ENCODE measurements at regions of chr16 and their contacts with region 1.

Region 1: GRCh38 chr16:66872559-66872942 is 7.8 kb upstream of the PDP2 start:
- DNase-seq: no peak

Region 2: DNA sequence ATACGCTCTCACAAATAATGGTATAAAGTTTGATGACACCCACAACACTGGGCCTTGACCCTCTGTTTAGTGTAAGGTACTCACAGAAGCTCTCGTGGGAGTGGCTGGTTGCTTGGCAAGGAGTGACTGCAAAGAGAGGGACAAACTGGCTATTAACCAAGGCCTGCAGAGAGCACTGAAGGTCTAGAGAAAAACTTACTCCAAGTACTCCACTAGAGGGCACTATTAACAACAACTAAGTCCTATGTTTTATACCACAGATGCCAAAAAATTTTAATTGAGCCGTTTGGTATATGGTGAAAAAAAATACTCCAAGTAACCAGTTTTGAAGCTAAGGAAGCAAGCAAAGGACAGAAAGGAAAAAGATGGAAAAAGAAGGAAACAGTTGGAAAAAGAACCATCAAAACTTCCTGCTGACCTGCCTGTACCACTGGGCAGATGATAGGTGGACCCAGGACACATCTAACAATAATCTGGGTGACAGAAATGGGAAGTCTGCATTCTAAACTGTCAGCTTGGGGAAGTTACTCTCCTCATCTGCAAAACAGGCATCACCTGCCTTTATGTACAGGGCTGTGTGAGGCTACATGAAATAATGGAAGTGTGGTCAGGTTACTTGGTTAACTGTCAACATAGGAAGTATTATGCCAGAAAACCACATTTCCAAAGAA is 144.3 kb before region 1 on chr16:
- intact Hi-C with region 1: loop called (anchors 5 kb)
- DNase-seq: no peak

Region 3: DNA sequence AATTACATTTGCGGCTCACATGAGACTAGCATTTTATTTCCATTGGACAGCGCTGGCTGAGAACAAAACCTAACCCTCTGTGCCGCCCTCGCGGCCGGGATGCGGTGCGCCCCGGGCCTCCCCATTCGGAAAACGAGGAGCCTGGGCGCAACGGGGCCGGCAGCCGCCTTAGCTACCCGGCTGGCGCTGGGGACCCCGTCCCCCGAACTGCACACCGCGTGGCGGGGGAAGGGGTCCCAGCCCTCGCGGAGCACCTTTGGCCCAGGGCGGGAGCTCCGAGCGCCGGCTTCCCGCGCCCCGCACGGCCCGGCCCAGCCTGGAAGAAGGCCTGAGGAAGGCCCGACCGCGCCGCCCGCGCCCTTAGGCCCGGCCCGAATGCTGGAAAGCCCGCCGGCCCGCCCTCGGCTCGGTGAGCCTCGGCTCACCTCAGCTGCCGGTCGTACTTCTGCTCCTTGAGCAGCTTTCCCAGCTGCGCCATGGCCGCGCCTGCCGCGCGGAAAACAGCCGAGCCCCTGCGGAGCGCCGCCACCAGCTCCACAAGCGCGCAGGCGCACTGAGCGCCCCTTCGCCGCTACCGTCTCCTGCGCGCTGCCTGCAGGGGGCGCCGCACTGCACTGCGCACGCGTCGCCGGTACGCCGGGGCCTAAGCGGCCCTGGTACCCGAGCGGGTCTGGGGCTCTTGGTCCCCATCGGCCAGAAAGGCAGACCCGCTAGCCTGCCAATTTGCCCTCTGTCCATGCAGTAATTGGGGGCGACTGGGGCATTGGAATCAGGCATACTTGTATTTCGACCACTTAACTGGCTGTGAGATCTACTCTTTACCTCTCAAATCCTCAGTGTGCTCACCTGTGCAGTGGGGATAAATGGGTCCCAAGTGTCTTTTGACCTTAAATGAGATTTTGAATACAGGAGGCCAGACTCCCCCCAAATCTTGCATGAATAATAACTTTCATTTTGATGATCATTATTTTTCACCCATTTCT is 41.8 kb before region 1 on chr16 and contains the start of gene NAE1:
- intact Hi-C with region 1: loop called (anchors 5 kb)
- DNase-seq: peak; percentile 94
- total RNA-seq, gene NAE1: 31.1 TPM

Region 4: GRCh38 chr16:66844342-66845079 is 28.0 kb before region 1 on chr16 and contains the start of gene CA7:
- intact Hi-C with region 1: no loop called
- DNase-seq: no peak
- total RNA-seq, gene CA7: not detected

Region 5: DNA sequence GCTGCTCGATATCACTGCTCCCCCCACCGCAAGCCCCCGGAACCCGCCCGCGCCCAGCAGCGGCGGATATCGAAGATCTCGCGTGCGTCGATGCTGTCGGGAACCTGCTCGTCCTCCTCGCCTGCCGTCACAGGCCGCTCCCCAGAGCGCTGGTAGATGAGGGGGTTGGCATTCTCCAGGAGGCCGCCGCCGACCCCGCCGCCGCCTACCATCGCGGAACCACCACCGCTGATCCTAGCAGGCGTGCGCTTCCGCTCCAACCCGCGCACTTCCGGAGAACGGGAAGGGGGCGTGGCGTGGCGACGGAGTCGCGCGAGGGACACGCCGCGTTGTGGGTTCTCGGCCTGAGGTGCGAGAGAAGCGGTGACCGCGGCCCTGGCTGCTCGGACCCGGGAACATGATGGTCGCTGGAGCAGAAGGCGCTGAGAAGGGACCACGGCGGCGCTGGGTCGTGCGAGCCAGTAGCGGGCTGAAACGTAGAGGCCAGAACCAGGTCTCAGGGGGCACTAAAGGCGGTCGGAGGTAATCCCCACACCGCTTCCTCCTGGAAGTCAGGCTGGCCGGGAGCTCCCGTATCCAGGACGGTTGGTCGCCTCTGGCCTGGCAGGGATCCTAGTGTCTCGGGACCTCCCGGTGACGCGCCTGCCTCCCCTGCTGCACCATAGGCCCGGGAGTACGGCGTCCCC is 61.7 kb after region 1 on chr16 and contains the start of gene CIAO2B:
- intact Hi-C with region 1: no loop called
- DNase-seq: peak; percentile 95
- total RNA-seq, gene CIAO2B: 118 TPM

Region 6: GRCh38 chr16:66947302-66948065 is 74.9 kb after region 1 on chr16:
- intact Hi-C with region 1: no loop called
- DNase-seq: no peak

Measured in cardiac septum (tissue), 1 donor.